ENCODE measurements at regions of chr19 and their contacts with region 1.

Region 1: DNA sequence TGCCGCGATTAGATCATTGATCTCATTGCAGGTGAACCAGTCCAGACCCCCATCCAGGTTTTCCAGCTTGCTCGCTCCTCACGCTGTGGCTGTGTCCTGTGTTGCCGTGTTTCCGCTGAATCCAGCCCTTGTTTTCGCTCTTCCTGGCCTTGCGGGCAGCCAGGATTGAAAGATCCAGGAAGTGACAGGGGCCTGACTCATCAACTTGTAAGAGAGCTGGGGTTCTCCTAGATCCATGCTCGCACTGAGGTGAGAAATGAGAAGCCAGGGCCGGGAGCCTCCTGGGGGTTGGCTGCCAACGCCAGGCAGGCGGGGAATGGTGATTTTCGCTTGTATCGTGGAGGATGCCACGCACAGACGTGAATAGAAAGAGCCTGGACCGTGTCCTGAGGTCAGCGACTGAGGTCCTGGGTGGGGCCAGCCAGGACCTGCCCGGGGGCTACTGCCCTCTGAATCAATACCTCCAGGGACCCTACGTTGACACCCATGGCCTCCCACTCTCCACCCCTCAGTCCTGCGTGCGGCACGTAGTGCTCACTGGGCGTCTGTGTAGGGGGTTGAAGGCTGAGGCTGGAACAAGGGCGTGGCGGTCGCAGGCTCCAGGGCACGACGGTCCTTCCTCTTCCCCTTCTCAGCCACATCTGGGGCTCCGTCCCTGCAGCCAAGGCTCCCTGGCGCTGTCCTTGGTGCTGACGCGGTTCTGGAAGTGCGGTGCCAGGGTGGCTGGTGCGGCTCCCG is 7.3 kb upstream of the PTPRH start:
- DNase-seq: peak; percentile 100
- ATAC-seq: peak; percentile 91
- H3K4me3 ChIP-seq: peak overlapping the region; percentile 44
- H3K27ac ChIP-seq: peak overlapping the region; percentile 84
- H3K4me1 ChIP-seq: peaks cover 22% of the 10 kb centered on the region
- H3K27me3 ChIP-seq: no peaks in the 10 kb centered on the region
- CTCF ChIP-seq: no peak

Region 2: GRCh38 chr19:55132453-55133129 is 84.0 kb before region 1 on chr19:
- CTCF ChIA-PET with region 1: no interaction called
- POLR2A ChIA-PET with region 1: no interaction called
- intact Hi-C with region 1: no loop called
- DNase-seq: no peak
- ATAC-seq: no peak
- H3K4me3 ChIP-seq: no peak overlapping the region
- H3K27ac ChIP-seq: no peak overlapping the region
- H3K4me1 ChIP-seq: no peaks in the 10 kb centered on the region
- H3K27me3 ChIP-seq: no peaks in the 10 kb centered on the region
- CTCF ChIP-seq: no peak

Region 3: GRCh38 chr19:55173714-55174409 is 42.8 kb before region 1 on chr19:
- CTCF ChIA-PET with region 1: no interaction called
- POLR2A ChIA-PET with region 1: no interaction called
- intact Hi-C with region 1: loop called (anchors 5 kb)
- DNase-seq: peak; percentile 85
- ATAC-seq: peak; percentile 84
- H3K4me3 ChIP-seq: peak overlapping the region; percentile 73
- H3K27ac ChIP-seq: peak overlapping the region; percentile 39
- H3K4me1 ChIP-seq: peaks cover 12% of the 10 kb centered on the region
- H3K27me3 ChIP-seq: no peaks in the 10 kb centered on the region
- CTCF ChIP-seq: no peak; the same call in 1 of the 2 replicates

Region 4: DNA sequence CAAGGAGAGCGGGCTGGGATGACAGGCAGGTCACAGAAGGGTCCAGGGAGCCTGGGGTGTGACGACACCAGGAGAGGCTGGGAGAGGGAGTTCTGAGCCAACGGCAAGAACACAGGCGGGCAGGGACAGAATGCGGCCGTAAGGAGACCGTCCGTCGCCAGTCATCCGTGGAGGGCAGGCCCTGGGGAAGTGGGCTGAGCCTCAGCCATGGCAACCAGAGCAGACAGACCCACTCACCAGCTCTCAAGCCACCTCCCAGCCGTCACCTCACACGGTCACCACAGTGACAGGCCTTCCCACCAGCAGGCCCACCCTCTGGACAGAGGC is 15.6 kb after region 1 on chr19:
- CTCF ChIA-PET with region 1: no interaction called
- POLR2A ChIA-PET with region 1: no interaction called
- intact Hi-C with region 1: no loop called
- DNase-seq: no peak
- ATAC-seq: no peak
- H3K4me3 ChIP-seq: no peak overlapping the region
- H3K27ac ChIP-seq: no peak overlapping the region
- H3K4me1 ChIP-seq: no peaks in the 10 kb centered on the region
- H3K27me3 ChIP-seq: no peaks in the 10 kb centered on the region
- CTCF ChIP-seq: no peak

Region 5: DNA sequence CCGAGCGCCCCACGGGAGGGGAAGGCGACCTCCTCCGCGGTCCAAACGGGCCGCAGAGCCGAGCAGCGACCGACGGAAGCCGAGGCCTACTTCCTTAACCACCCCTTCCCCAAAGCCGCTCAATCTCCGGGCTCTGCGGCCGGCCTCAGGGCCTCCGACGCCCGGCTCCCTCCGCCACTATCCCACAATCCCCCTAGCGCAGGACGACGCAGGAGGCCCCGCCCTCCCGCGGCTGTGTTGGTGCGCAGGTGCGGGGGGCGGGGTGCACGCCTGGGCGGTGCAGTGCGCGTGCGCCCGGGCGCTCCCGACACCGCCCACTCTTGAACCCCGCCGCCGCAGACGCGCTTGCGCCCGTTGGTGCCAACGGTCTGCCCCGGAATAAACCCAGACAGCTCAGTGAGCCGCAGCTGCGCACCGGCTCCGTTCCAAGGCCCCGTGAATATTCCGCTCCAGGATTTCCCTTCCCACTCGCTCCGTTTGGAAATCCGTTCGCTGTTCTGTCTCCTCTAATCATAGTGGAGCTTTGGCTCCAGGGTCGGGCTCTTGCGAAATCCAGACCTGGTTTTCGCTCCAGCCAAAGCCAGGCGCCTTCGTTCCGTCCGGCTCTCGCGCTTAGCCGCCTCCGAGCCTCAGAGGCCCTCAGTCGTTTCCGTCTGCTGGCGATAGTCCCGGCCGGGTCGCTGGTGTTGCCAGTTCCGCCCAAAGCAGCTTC is 42.4 kb after region 1 on chr19 and contains the start of gene PPP6R1:
- CTCF ChIA-PET with region 1: no interaction called
- POLR2A ChIA-PET with region 1: no interaction called
- intact Hi-C with region 1: loop called (anchors 1 kb)
- DNase-seq: peak; percentile 100
- ATAC-seq: peak; percentile 78
- H3K4me3 ChIP-seq: peak within 1 kb of the TSS; percentile 95
- H3K27ac ChIP-seq: peak within 1 kb of the TSS; percentile 95
- H3K4me1 ChIP-seq: peaks cover 40% of the 10 kb centered on the region
- H3K27me3 ChIP-seq: no peaks in the 10 kb centered on the region
- CTCF ChIP-seq: no peak
- total RNA-seq, gene PPP6R1: 159 and 221 TPM in 2 replicates

Region 6: DNA sequence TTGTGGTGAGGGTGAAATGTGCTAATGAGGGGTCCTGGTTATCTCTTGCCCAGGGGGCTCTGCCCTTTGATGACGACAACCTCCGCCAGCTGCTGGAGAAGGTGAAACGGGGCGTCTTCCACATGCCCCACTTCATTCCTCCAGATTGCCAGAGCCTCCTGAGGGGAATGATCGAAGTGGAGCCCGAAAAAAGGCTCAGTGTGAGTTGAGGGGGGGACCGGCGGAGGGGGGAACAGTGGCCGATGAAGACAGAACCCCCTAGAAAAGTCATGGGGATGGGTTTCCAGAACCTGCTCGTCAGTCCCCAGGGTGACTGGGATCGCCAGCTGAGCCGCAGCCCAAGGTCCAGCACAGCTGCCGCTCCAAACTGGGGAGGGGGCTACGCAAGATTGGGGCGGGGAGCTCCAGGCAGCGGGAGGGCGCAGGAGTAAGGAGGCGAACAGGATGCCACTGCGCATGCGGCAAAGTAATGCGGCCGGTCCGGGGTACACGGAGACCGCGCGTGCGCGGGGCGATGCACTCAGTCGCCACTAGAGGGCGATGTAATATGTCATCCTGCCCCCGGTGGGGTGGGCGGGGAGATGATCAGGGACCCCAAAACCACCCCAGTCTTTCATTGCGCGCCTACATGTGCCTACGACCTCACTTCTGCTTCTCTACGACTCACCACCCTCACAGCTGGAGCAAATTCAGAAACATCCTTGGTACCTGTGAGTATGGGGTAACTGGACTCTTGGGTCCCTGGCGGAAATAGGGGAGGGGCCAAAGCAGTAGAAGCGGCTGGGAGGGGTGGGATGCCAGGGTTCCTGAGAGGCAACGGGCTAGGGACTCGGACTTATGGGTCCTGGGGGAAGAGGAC is 85.1 kb after region 1 on chr19:
- CTCF ChIA-PET with region 1: no interaction called
- POLR2A ChIA-PET with region 1: no interaction called
- intact Hi-C with region 1: no loop called
- DNase-seq: peak; percentile 91
- ATAC-seq: peak; percentile 87
- H3K4me3 ChIP-seq: peak overlapping the region; percentile 57
- H3K27ac ChIP-seq: no peak overlapping the region
- H3K4me1 ChIP-seq: peaks cover 7% of the 10 kb centered on the region; the same call in 1 of the 2 replicates
- H3K27me3 ChIP-seq: no peaks in the 10 kb centered on the region
- CTCF ChIP-seq: peak; percentile 97

Region 7: DNA sequence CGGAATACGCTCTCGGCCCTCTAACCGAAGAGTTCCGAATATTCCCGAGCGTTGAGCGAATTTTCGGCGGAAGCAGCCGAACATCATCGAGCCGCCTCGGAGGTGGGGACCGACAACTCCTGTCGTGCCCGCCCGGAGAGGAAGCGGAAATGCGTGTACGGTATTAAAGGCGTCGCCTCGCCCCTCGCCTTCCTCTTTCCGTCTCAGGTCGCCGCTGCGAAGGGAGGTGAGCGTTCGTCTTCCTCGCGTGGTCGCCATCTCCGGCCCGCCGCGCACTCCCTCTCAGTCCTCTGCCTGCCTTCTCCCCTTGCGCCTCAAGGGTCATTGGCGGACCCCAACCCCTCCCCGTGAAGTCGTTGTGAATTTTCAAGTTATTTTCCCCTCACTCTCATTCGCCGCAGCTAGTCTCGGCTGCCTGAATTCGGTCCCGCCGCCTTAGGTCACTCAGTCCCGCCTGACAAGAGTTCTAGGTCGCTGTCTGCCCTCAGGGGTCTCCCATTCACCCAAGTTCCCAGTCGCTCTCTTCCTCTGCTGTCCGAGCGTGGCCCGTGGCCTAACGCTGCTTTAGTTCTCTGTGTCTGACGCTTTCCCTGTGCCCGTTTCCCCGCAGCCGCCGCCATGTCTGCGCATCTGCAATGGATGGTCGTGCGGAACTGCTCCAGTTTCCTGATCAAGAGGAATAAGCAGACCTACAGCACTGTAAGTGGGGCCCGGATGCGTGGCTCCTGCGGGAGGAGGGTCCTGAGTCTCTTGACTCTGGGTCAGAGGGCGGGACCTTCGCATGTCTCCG is 169.3 kb after region 1 on chr19 and contains the start of gene RPL28:
- CTCF ChIA-PET with region 1: interaction called, 3 read pairs
- POLR2A ChIA-PET with region 1: no interaction called
- intact Hi-C with region 1: loop called (anchors 10 kb)
- DNase-seq: peak; percentile 100
- ATAC-seq: peak; percentile 71
- H3K4me3 ChIP-seq: peak within 1 kb of the TSS; percentile 98
- H3K27ac ChIP-seq: peak within 1 kb of the TSS; percentile 54
- H3K4me1 ChIP-seq: peaks cover 41% of the 10 kb centered on the region
- H3K27me3 ChIP-seq: no peaks in the 10 kb centered on the region
- CTCF ChIP-seq: no peak
- total RNA-seq, gene RPL28: 550 and 836 TPM in 2 replicates

Region 8: GRCh38 chr19:55407800-55408532 is 191.3 kb after region 1 on chr19:
- CTCF ChIA-PET with region 1: no interaction called
- POLR2A ChIA-PET with region 1: no interaction called
- intact Hi-C with region 1: no loop called
- DNase-seq: peak; percentile 99
- ATAC-seq: peak; percentile 93
- H3K4me3 ChIP-seq: peak overlapping the region; percentile 79
- H3K27ac ChIP-seq: peak overlapping the region; percentile 93
- H3K4me1 ChIP-seq: peaks cover 20% of the 10 kb centered on the region
- H3K27me3 ChIP-seq: no peaks in the 10 kb centered on the region
- CTCF ChIP-seq: no peak

Region 9: DNA sequence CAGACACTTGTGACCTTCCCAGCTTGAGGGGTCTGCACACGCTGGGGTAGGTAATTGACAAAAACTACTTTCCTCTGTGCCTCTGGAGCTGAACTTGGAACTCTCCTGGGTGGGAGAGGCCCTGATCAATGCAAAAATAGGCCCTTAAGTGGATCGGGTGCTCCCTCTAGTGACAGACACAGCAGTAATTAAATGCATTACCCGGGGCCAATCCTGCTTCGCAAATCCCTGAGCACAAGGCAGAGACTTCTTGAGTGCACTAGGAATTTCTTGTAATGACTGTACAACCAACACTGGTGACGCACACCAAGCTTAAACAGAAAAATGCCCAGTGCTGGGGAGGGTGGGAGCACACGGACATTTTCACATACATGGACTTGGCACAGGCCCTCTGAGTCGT is 201.6 kb after region 1 on chr19:
- CTCF ChIA-PET with region 1: no interaction called
- POLR2A ChIA-PET with region 1: no interaction called
- intact Hi-C with region 1: loop called (anchors 1 kb)
- DNase-seq: peak; percentile 93
- ATAC-seq: peak; percentile 96
- H3K4me3 ChIP-seq: no peak overlapping the region
- H3K27ac ChIP-seq: no peak overlapping the region
- H3K4me1 ChIP-seq: no peaks in the 10 kb centered on the region
- H3K27me3 ChIP-seq: no peaks in the 10 kb centered on the region
- CTCF ChIP-seq: peak; percentile 97